Aorta (tissue), 5 donors: ENCODE measurements at regions of chr3 and their contacts with region 1.

Region 1: GRCh38 chr3:60301142-60301541 is 950.1 kb downstream of the FHIT start:
- DNase-seq: no peak
- ATAC-seq: no peak
- H3K4me3 ChIP-seq: no peak overlapping the region
- H3K27ac ChIP-seq: no peak overlapping the region
- H3K4me1 ChIP-seq: no peaks in the 10 kb centered on the region
- H3K27me3 ChIP-seq: no peaks in the 10 kb centered on the region

Region 2: GRCh38 chr3:60064210-60065178 is 236.6 kb before region 1 on chr3:
- intact Hi-C with region 1: no loop called
- DNase-seq: no peak
- ATAC-seq: no peak
- H3K4me3 ChIP-seq: no peak overlapping the region
- H3K27ac ChIP-seq: no peak overlapping the region
- H3K4me1 ChIP-seq: no peaks in the 10 kb centered on the region
- H3K27me3 ChIP-seq: no peaks in the 10 kb centered on the region

Region 3: GRCh38 chr3:60240492-60240891 is 60.6 kb before region 1 on chr3:
- intact Hi-C with region 1: loop called in 1 of 2 experiments (anchors 2 kb)
- DNase-seq: no peak
- ATAC-seq: no peak
- H3K4me3 ChIP-seq: no peak overlapping the region
- H3K27ac ChIP-seq: no peak overlapping the region
- H3K4me1 ChIP-seq: no peaks in the 10 kb centered on the region
- H3K27me3 ChIP-seq: no peaks in the 10 kb centered on the region